ENCODE measurements at regions of chr9 and their contacts with region 1.

Region 1: DNA sequence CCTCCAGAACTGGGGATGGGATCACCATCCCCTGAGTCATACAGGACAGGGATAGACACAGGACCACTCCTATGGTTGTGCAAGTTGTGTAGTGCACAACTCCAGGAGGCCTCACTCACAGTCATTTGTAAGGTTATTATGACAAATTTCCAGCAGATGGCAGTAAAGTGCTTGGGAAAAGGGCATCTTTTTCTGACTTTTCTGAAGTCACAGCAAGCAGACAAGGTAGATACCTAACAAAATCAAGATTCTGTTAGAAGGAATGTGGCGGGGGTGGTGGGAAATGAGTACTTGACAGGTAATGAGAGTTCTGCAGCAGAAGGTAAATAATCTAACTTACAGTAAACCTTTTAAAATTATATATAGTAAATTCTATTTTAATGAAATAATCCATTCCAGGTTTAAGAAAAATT is 16.7 kb upstream of the KIF27 start:
- DNase-seq: no peak
- H3K4me3 ChIP-seq: no peak overlapping the region
- H3K27ac ChIP-seq: no peak overlapping the region
- H3K4me1 ChIP-seq: no peaks in the 10 kb centered on the region
- H3K27me3 ChIP-seq: no peaks in the 10 kb centered on the region
- CTCF ChIP-seq: peak; percentile 68 to 71

Region 2: DNA sequence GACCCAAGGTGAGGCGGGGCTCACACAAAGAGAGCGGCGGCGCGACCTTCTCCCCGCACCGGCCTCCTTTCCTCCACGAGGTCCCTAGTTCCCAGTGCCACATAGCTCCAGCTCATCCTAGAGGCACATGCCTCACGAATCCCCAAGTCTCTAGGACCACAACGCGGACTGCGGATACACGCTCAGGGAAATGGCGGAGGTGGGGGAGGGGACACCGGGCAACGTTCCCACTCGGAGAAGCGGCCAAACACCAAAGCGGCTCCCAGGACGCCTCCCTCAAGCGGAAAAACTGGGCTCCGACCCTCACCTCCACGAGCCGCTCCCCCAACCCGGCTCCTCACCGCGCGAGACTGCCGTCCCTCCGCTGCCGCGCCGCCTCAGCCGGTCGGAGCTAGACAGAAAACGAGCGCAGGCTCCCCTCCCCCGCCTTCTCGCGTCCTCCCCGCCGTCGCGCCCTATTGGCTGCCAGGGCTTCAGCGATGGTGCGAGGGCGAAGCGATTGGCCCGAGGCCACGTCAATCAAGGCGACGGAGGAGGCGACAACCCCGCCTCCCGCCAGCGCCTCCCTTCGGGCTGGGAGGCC is 42.0 kb after region 1 on chr9 and contains the start of gene HNRNPK:
- intact Hi-C with region 1: no loop called
- DNase-seq: peak; percentile 98 to 99
- H3K4me3 ChIP-seq: peak within 1 kb of the TSS; percentile 90
- H3K27ac ChIP-seq: peak within 1 kb of the TSS; percentile 98 to 99
- H3K4me1 ChIP-seq: peaks cover 0 to 44% (median 16%) of the 10 kb centered on the region in 4 donors
- H3K27me3 ChIP-seq: no peaks in the 10 kb centered on the region
- CTCF ChIP-seq: peak in 1 of 2 experiments; percentile 12

Region 3: DNA sequence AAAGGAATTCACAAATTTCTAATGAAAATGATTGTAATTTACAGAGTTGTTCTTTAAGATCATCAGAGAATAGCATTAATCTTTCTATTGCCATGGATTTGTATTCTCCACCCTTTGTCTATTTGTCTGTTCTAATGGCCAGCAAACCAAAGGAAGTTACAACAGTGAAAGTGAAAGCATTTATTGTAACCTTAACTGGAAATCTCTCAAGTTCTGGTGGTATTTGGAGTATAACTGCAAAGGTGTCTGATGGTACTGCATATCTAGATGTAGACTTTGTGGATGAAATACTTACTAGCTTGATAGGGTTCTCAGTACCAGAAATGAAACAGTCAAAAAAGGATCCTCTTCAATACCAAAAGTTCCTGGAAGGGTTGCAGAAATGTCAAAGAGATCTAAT is 64.4 kb after region 1 on chr9:
- intact Hi-C with region 1: no loop called
- DNase-seq: no peak
- H3K4me3 ChIP-seq: no peak overlapping the region
- H3K27ac ChIP-seq: no peak overlapping the region
- H3K4me1 ChIP-seq: no peaks in the 10 kb centered on the region
- H3K27me3 ChIP-seq: no peaks in the 10 kb centered on the region
- CTCF ChIP-seq: no peak

Region 4: GRCh38 chr9:84261082-84261746 is 323.3 kb after region 1 on chr9:
- intact Hi-C with region 1: loop called (anchors 2 kb)
- DNase-seq: peak; percentile 69 to 85
- H3K4me3 ChIP-seq: peak overlapping the region; percentile 22 to 29
- H3K27ac ChIP-seq: no peak overlapping the region
- H3K4me1 ChIP-seq: no peaks in the 10 kb centered on the region
- H3K27me3 ChIP-seq: peaks cover 0 to 11% of the 10 kb centered on the region in 2 donors
- CTCF ChIP-seq: peak; percentile 85 to 86